Activated naive CD4-positive, alpha-beta T cell treated with anti-CD3 and anti-CD28 coated beads for 36 hours (primary cell): ENCODE measurements at regions of chr1 and their contacts with region 1.

Region 1: GRCh38 chr1:204806943-204807687 is 63.5 kb upstream of the NFASC start:
- DNase-seq: peak; percentile 92
- H3K4me3 Mint-ChIP-seq: peak overlapping the region; percentile 76
- H3K27ac Mint-ChIP-seq: peak overlapping the region; percentile 74
- H3K4me1 Mint-ChIP-seq: peaks cover 9% of the 10 kb centered on the region
- H3K27me3 Mint-ChIP-seq: no peaks in the 10 kb centered on the region

Region 2: DNA sequence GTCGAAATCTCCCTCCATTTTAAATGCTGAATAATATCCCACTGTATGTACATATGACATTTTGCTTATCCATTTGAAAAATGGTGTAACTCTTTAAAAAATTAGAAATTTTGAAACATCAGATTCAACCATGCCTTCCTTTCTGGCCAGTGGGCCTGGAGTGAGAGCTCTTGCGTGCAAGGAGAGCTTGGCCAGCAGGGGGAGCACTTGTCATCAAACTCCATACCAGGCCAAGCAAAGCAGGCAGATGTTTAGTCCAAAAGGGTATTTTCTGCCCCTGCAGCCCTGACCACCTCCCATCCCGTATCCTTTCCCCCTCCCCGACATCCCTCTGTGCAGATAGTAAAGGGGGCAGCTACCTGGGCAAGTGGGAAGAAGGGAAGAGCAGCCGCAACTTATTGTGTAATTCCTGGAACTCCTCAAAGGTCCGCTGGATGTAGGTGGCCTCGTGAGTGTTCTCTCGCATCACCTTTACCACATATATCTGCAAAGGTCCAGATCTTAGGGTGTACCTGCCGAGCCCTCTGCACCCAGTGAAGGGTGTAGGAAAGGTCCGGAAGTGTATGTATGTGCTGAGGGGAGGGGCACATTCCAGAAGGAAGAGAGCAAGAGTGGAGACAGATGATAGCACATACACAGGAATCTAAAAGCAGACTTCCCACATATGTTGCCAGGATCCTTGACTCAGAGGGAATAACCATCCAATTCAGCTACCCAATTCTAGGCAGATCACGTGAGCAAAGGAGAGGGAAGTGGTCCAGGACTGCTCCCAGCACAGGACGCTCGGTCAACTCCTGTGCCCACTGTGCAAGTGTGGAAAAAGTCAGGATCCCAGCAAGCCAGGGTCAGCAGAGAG is 375.6 kb before region 1 on chr1:
- CTCF ChIA-PET with region 1: interaction called, 11 read pairs
- intact Hi-C with region 1: loop called (anchors 5 kb)
- DNase-seq: peak; percentile 89
- H3K4me3 Mint-ChIP-seq: no peak overlapping the region
- H3K27ac Mint-ChIP-seq: no peak overlapping the region
- H3K4me1 Mint-ChIP-seq: peaks cover 8% of the 10 kb centered on the region
- H3K27me3 Mint-ChIP-seq: no peaks in the 10 kb centered on the region

Region 3: DNA sequence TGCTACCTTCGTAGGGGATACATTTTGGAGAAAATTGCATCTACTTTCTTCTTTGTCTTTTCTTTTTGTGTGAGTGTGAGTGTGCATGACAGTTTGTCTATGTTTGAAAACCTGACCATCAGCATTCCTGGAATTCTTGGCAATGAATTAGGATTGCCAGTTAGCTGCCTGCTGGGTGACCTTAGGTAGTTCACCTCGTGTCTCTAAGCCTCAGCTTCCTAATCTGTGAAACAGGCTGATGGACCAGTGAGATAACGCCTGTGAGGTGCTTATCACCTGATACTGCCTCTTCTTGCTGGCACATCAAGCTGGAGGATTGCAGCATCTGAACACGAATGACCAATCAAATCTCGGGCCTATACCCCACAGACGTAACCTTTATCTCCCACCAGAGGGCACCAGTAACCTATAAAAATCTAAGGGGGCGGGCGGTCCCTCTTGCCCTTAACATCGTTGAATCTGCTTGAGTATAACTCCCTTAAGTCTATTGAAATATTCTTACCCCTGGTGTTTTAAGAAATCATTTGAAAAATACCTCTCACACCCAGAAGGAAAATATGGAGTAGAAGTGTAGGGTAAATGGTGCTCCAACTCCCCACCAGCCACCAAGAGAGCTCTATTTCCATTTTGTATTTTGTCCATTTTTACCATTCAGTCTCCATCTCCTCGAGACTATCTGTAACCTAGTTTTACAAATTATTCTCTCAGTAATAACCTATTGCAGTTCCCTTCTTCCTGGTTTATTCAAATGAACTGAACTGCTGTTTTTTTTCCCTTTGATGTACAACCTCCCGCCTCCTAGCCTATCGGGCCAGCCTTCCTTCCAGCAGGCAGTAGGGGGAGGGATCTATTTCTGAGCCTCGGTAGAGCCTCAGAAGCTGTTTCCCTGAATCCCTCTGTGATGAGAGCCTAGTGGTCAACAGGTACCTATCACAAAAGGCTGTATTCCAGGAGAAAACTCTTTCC is 241.2 kb before region 1 on chr1:
- CTCF ChIA-PET with region 1: interaction called, 89 read pairs
- intact Hi-C with region 1: loop called (anchors 1 kb)
- DNase-seq: peak; percentile 76
- H3K4me3 Mint-ChIP-seq: no peak overlapping the region
- H3K27ac Mint-ChIP-seq: no peak overlapping the region
- H3K4me1 Mint-ChIP-seq: peaks cover 45% of the 10 kb centered on the region
- H3K27me3 Mint-ChIP-seq: no peaks in the 10 kb centered on the region

Region 4: DNA sequence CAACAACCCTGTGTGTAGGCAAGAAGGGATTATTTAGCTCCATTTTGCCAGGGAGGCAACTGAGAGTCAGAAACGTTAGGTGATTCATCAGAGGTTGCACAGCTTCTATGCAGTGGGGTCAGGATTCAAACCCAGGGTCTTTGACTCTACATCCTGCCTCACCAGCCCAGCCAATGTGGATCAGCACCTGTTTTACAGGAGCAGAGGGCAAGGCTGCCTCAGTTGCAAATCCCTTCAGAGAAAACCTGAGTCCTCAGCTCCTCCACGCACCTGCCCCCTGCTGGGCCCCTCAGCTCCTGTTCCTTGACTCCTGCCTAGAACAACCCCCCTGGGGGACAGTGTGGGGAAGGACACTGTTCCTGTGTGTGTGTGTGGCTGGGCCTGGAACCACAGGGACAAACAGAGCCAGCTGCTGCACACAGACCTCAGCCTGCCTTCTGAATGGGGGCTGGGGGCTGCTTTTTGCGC is 183.2 kb before region 1 on chr1:
- CTCF ChIA-PET with region 1: interaction called, 14 read pairs
- intact Hi-C with region 1: no loop called
- DNase-seq: peak; percentile 25
- H3K4me3 Mint-ChIP-seq: no peak overlapping the region
- H3K27ac Mint-ChIP-seq: no peak overlapping the region
- H3K4me1 Mint-ChIP-seq: no peaks in the 10 kb centered on the region
- H3K27me3 Mint-ChIP-seq: no peaks in the 10 kb centered on the region

Region 5: GRCh38 chr1:204763706-204764427 is 43.2 kb before region 1 on chr1:
- CTCF ChIA-PET with region 1: interaction called, 34 read pairs
- intact Hi-C with region 1: loop called (anchors 1 kb)
- DNase-seq: peak; percentile 85
- H3K4me3 Mint-ChIP-seq: no peak overlapping the region
- H3K27ac Mint-ChIP-seq: no peak overlapping the region
- H3K4me1 Mint-ChIP-seq: peaks cover 6% of the 10 kb centered on the region
- H3K27me3 Mint-ChIP-seq: peaks cover 3% of the 10 kb centered on the region

Region 6: DNA sequence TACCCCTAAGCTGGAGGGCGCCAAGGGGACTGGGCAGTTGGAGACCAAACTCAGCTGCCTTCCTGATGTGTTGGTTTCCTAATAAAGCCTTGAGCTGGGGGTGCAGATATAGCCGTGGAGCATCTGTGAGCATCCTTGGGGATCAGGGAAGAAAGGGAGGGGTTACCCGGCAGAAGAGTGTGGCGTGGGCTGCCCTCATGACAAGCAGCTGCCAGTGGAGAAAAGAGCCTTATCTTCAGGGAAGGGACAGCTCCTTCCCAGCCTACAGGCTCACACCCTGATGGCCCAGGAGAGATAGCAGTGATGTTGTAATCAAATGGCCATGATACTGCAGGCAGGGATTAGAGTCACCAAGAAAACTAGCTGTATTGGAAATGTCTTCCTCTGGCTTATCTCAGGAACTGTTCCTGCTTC is 52.8 kb after region 1 on chr1:
- CTCF ChIA-PET with region 1: interaction called, 11 read pairs
- intact Hi-C with region 1: no loop called
- DNase-seq: no peak
- H3K4me3 Mint-ChIP-seq: no peak overlapping the region
- H3K27ac Mint-ChIP-seq: no peak overlapping the region
- H3K4me1 Mint-ChIP-seq: no peaks in the 10 kb centered on the region
- H3K27me3 Mint-ChIP-seq: peaks cover 9% of the 10 kb centered on the region